ENCODE measurements at regions of chr1 and their contacts with region 1.

Region 1: DNA sequence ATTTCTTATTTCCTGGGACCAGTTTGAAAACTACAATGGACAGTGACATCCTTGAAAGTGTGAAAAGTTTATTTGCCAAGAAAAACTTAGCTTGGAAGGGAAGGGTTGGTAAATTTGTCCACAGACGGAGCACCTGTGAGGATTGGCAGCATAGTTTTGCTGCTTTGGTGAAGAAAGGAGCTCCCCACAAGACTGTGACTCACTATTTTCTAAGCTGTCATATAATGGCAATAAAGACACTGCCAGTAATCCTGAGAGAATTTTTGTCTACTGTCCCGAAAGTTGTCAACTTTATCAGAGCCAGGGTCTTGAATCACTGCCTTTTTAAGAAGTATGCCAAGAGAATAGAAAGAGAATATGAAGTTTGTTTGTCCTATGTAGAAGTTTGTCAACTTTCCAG is 230.8 kb downstream of the NEGR1 start:
- DNase-seq: no peak
- ATAC-seq: no peak
- H3K4me3 ChIP-seq: no peak overlapping the region
- H3K27ac ChIP-seq: no peak overlapping the region
- H3K4me1 ChIP-seq: peaks cover 1% of the 10 kb centered on the region
- H3K27me3 ChIP-seq: no peaks in the 10 kb centered on the region

Region 2: GRCh38 chr1:70874111-70874510 is 1177.4 kb before region 1 on chr1:
- intact Hi-C with region 1: loop called in 1 of 4 experiments (anchors 10 kb)
- DNase-seq: peak in 2 of 3 donors; percentile 34 to 59
- ATAC-seq: peak; percentile 28 to 72
- H3K4me3 ChIP-seq: no peak overlapping the region
- H3K27ac ChIP-seq: no peak overlapping the region
- H3K4me1 ChIP-seq: peaks cover 1% of the 10 kb centered on the region
- H3K27me3 ChIP-seq: no peaks in the 10 kb centered on the region

Measured in right cardiac atrium (tissue), 5 donors.